Endothelial cell of umbilical vein (primary cell): ENCODE measurements at regions of chr5 and their contacts with region 1.

Region 1: GRCh38 chr5:177390363-177391300 is 6.4 kb downstream of the SLC34A1 start:
- DNase-seq: peak; percentile 88
- H3K4me3 ChIP-seq: no peak overlapping the region
- H3K27ac ChIP-seq: no peak overlapping the region
- H3K4me1 ChIP-seq: no peaks in the 10 kb centered on the region
- H3K27me3 ChIP-seq: no peaks in the 10 kb centered on the region
- CTCF ChIP-seq: peak; percentile 90 to 92
- POLR2A ChIP-seq: no peak

Region 2: GRCh38 chr5:177311723-177312648 is 78.6 kb before region 1 on chr5 and contains the start of gene MXD3:
- CTCF ChIA-PET with region 1: interaction called, 10 read pairs
- POLR2A ChIA-PET with region 1: no interaction called
- dilution Hi-C with region 1: no loop called
- intact Hi-C with region 1: no loop called
- DNase-seq: peak; percentile 92
- H3K4me3 ChIP-seq: peak within 1 kb of the TSS; percentile 49 to 64 (median 58)
- H3K27ac ChIP-seq: peak within 1 kb of the TSS; percentile 78
- H3K4me1 ChIP-seq: peaks cover 22% of the 10 kb centered on the region
- H3K27me3 ChIP-seq: no peaks in the 10 kb centered on the region
- CTCF ChIP-seq: no peak
- POLR2A ChIP-seq: peak; percentile 63
- total RNA-seq, gene MXD3: 30.5 and 44.2 TPM in 2 replicates

Region 3: GRCh38 chr5:177351385-177352329 is 39.0 kb before region 1 on chr5 and contains the start of gene LMAN2:
- CTCF ChIA-PET with region 1: interaction called, 5 read pairs
- POLR2A ChIA-PET with region 1: no interaction called
- dilution Hi-C with region 1: no loop called
- intact Hi-C with region 1: loop called (anchors 1 kb)
- DNase-seq: peak; percentile 97
- H3K4me3 ChIP-seq: peak within 1 kb of the TSS; percentile 29 to 95 (median 61)
- H3K27ac ChIP-seq: peak within 1 kb of the TSS; percentile 77
- H3K4me1 ChIP-seq: peaks cover 21% of the 10 kb centered on the region
- H3K27me3 ChIP-seq: no peaks in the 10 kb centered on the region
- CTCF ChIP-seq: no peak
- POLR2A ChIP-seq: peak; percentile 77
- total RNA-seq, gene LMAN2: 151 and 160 TPM in 2 replicates

Region 4: GRCh38 chr5:177409043-177409801 is 18.6 kb after region 1 on chr5 and contains the start of gene F12:
- CTCF ChIA-PET with region 1: interaction called, 138 read pairs
- POLR2A ChIA-PET with region 1: no interaction called
- dilution Hi-C with region 1: no loop called
- intact Hi-C with region 1: no loop called
- DNase-seq: no peak
- H3K4me3 ChIP-seq: no peak within 1 kb of the TSS
- H3K27ac ChIP-seq: no peak within 1 kb of the TSS
- H3K4me1 ChIP-seq: peaks cover 5% of the 10 kb centered on the region
- H3K27me3 ChIP-seq: peaks cover 0 to 6% of the 10 kb centered on the region in 2 experiments
- CTCF ChIP-seq: no peak
- POLR2A ChIP-seq: no peak
- total RNA-seq, gene F12: 1.00 and 1.4 TPM in 2 replicates

Region 5: GRCh38 chr5:177509381-177509951 is 118.8 kb after region 1 on chr5 and contains the start of gene DOK3:
- CTCF ChIA-PET with region 1: interaction called, 10 read pairs
- POLR2A ChIA-PET with region 1: no interaction called
- dilution Hi-C with region 1: no loop called
- intact Hi-C with region 1: no loop called
- DNase-seq: peak; percentile 21
- H3K4me3 ChIP-seq: peak within 1 kb of the TSS in 1 of 3 experiments; percentile 7
- H3K27ac ChIP-seq: no peak within 1 kb of the TSS
- H3K4me1 ChIP-seq: peaks cover 9% of the 10 kb centered on the region
- H3K27me3 ChIP-seq: no peaks in the 10 kb centered on the region
- CTCF ChIP-seq: no peak
- POLR2A ChIP-seq: no peak
- total RNA-seq, gene DOK3: 5.3 and 8.1 TPM in 2 replicates